T-cell (primary cell): ENCODE measurements at regions of chr16 and their contacts with region 1.

Region 1: GRCh38 chr16:68764862-68765261 is 27.8 kb downstream of the CDH1 start:
- DNase-seq: peak in 2 of 35 experiments; percentile 2 to 20
- ATAC-seq: peak in 3 of 4 experiments; percentile 50 to 54 (median 54)
- H3K4me3 ChIP-seq: no peak overlapping the region
- H3K4me3 Mint-ChIP-seq: no peak overlapping the region
- H3K27ac ChIP-seq: no peak overlapping the region
- H3K27ac Mint-ChIP-seq: peak overlapping the region in 1 of 2 donors; percentile 49
- H3K4me1 ChIP-seq: peaks cover 0 to 4% of the 10 kb centered on the region in 2 experiments
- H3K4me1 Mint-ChIP-seq: peaks cover 0 to 16% (median 5%) of the 10 kb centered on the region in 3 donors
- H3K27me3 ChIP-seq: peaks cover 0 to 3% of the 10 kb centered on the region in 2 experiments
- H3K27me3 Mint-ChIP-seq: peaks cover 0 to 3% of the 10 kb centered on the region in 2 donors

Region 2: DNA sequence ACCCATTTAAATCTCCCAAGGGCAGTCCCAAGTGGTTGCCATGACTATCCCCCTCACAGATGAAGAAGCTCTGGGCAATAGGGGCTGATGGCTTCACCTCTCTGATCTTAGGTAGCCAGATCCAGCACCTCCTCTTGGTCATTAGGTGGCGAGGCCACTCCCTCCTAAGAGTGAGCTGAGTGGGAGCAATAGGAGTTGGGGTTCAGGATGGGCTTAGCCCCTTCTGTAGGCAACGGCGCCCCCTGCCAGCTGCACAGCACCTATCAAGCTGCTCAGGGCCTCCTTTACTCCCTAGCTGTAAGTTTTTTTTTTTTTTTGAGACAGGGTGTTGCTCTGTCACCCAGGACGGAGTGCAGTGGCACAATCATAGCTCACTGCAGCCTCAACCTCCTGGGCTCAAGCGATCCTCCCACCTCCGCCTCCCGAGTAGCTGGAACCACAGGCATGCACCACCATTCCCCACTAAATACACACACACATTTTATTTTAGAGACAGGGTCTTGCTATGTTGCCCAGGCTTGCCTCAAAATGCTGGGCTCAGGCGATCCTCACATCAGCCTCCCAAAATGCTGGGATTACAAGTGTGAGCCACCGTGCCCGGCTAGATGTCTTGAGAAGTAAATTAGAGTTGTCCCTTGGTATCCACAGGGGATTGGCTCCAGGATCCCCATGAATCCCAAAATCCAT is 1836.0 kb before region 1 on chr16:
- CTCF ChIA-PET with region 1: no interaction called
- POLR2A ChIA-PET with region 1: interaction called in 1 of 2 experiments, 14 read pairs
- DNase-seq: peak in 6 of 35 experiments; percentile 18 to 45 (median 22)
- ATAC-seq: peak in 1 of 4 experiments; percentile 18
- H3K4me3 ChIP-seq: no peak overlapping the region
- H3K4me3 Mint-ChIP-seq: no peak overlapping the region
- H3K27ac ChIP-seq: no peak overlapping the region
- H3K27ac Mint-ChIP-seq: no peak overlapping the region
- H3K4me1 ChIP-seq: peaks cover 5 to 32% of the 10 kb centered on the region in 2 experiments
- H3K4me1 Mint-ChIP-seq: peaks cover 26 to 32% (median 27%) of the 10 kb centered on the region in 3 donors
- H3K27me3 ChIP-seq: peaks cover 3 to 31% of the 10 kb centered on the region in 2 experiments
- H3K27me3 Mint-ChIP-seq: peaks cover 4 to 22% of the 10 kb centered on the region in 2 donors